ENCODE measurements at regions of chr3 and their contacts with region 1.

Region 1: GRCh38 chr3:10115326-10116137 is at the start of gene BRK1:
- DNase-seq: peak; percentile 83 to 98 (median 93)
- ATAC-seq: peak; percentile 98
- H3K4me3 ChIP-seq: peak within 1 kb of the TSS; percentile 87 to 95
- H3K4me3 Mint-ChIP-seq: peak within 1 kb of the TSS; percentile 99
- H3K27ac ChIP-seq: peak within 1 kb of the TSS; percentile 81 to 87
- H3K27ac Mint-ChIP-seq: peak within 1 kb of the TSS; percentile 99
- H3K4me1 ChIP-seq: peaks cover 27% of the 10 kb centered on the region
- H3K4me1 Mint-ChIP-seq: peaks cover 43% of the 10 kb centered on the region
- H3K27me3 ChIP-seq: no peaks in the 10 kb centered on the region
- H3K27me3 Mint-ChIP-seq: peaks cover under 1% of the 10 kb centered on the region
- CTCF ChIP-seq: no peak
- total RNA-seq, gene BRK1: 31.5 to 36.3 TPM

Region 2: DNA sequence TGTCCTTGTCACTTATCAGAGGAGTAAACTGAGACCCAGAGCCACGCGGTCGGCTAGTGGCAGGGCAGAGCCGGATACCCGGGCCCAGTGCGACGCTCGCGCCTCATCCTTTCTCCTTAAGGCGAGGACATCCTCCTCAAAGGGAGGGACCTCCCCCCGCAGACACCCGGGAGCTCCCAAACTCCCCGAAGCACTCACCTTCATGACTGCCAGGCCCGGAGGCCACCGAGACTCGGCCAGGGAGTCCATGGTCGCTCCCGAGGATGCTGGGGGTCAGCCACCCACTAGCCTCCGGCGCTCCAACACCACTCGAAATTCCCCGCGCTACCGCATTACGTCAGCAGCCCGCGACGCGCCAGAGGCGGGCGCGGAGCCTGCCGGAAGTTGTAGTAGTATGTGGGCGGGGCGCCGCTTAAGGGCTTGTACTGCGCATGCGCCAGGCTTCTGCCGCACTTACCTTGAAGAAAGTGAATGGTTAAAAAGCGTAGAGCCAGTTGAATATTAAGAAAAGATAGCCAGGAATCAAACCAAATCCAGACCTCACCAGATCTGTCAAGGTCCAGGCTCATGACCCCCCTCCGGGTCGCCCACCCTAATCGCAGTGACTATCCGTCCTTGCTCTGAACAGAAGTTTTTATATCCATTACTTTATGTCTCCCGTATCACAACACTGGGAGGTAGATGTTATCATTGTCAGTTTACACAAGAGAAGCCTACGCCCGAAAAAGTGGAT is 1152.2 kb before region 1 on chr3 and contains the start of gene RAD18:
- CTCF ChIA-PET with region 1: no interaction called
- POLR2A ChIA-PET with region 1: no interaction called
- intact Hi-C with region 1: loop called in 1 of 2 experiments (anchors 10 kb)
- DNase-seq: peak; percentile 83 to 95 (median 93)
- ATAC-seq: peak; percentile 94
- H3K4me3 ChIP-seq: peak within 1 kb of the TSS; percentile 85 to 89
- H3K4me3 Mint-ChIP-seq: peak within 1 kb of the TSS; percentile 98
- H3K27ac ChIP-seq: peak within 1 kb of the TSS; percentile 87 to 92
- H3K27ac Mint-ChIP-seq: peak within 1 kb of the TSS; percentile 94
- H3K4me1 ChIP-seq: peaks cover 8% of the 10 kb centered on the region
- H3K4me1 Mint-ChIP-seq: peaks cover 35% of the 10 kb centered on the region
- H3K27me3 ChIP-seq: no peaks in the 10 kb centered on the region
- H3K27me3 Mint-ChIP-seq: peaks cover under 1% of the 10 kb centered on the region
- CTCF ChIP-seq: no peak
- total RNA-seq, gene RAD18: 11.7 to 12.1 TPM

Region 3: GRCh38 chr3:9476935-9477334 is 638.6 kb before region 1 on chr3:
- CTCF ChIA-PET with region 1: no interaction called
- POLR2A ChIA-PET with region 1: no interaction called
- intact Hi-C with region 1: no loop called
- DNase-seq: no peak
- ATAC-seq: no peak
- H3K4me3 ChIP-seq: no peak overlapping the region
- H3K4me3 Mint-ChIP-seq: no peak overlapping the region
- H3K27ac ChIP-seq: no peak overlapping the region
- H3K27ac Mint-ChIP-seq: no peak overlapping the region
- H3K4me1 ChIP-seq: no peaks in the 10 kb centered on the region
- H3K4me1 Mint-ChIP-seq: no peaks in the 10 kb centered on the region
- H3K27me3 ChIP-seq: no peaks in the 10 kb centered on the region
- H3K27me3 Mint-ChIP-seq: no peaks in the 10 kb centered on the region
- CTCF ChIP-seq: no peak

Region 4: DNA sequence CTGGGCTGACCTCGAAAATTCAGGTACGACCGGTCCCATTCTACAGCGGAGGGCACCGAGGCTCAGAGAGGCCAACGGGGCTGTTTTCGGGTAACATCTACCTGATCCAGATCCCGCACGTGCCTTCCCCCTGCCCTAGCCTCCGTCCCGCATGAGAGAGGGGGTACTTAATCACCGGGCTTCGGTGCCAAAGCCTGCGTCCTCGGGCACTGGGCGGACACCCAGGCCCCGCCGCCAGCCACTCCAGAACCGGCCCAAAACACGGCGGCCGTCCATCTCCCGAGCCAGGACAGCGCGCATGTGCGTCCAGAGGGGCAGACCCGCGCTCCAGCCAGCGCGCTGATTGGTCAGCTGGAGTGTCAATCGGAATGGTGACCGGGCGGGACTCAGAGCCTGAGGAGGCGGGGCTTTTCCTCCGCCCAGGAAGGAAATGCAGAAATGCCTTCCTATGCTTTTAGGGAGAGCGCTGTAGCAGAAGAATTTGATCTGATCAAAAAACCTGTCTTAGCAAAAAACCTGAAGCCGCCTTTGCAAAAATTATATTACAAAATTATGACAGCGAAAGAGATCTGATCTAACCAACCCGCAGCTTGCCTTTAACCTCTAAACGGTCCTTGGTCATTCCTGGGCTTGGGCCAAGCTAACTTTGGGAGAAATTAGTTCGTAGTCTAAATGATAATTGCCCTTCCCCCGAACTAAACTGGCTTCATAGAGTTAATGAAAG is 271.7 kb before region 1 on chr3 and contains the start of gene RPUSD3:
- CTCF ChIA-PET with region 1: no interaction called
- POLR2A ChIA-PET with region 1: no interaction called
- intact Hi-C with region 1: loop called in 1 of 2 experiments (anchors 5 kb)
- DNase-seq: peak; percentile 93 to 99 (median 96)
- ATAC-seq: peak; percentile 98
- H3K4me3 ChIP-seq: peak within 1 kb of the TSS; percentile 96 to 99
- H3K4me3 Mint-ChIP-seq: peak within 1 kb of the TSS; percentile 97
- H3K27ac ChIP-seq: peak within 1 kb of the TSS; percentile 64 to 82
- H3K27ac Mint-ChIP-seq: peak within 1 kb of the TSS; percentile 90
- H3K4me1 ChIP-seq: peaks cover 6% of the 10 kb centered on the region
- H3K4me1 Mint-ChIP-seq: peaks cover 26% of the 10 kb centered on the region
- H3K27me3 ChIP-seq: no peaks in the 10 kb centered on the region
- H3K27me3 Mint-ChIP-seq: no peaks in the 10 kb centered on the region
- CTCF ChIP-seq: no peak
- total RNA-seq, gene RPUSD3: 5.3 to 6.4 TPM

Region 5: GRCh38 chr3:9986237-9986725 is 129.3 kb before region 1 on chr3:
- CTCF ChIA-PET with region 1: no interaction called
- POLR2A ChIA-PET with region 1: no interaction called
- intact Hi-C with region 1: loop called in 1 of 2 experiments (anchors 2 kb)
- DNase-seq: no peak
- ATAC-seq: peak; percentile 46
- H3K4me3 ChIP-seq: peak overlapping the region; percentile 71 to 83
- H3K4me3 Mint-ChIP-seq: peak overlapping the region; percentile 93
- H3K27ac ChIP-seq: peak overlapping the region; percentile 83 to 93
- H3K27ac Mint-ChIP-seq: peak overlapping the region; percentile 96
- H3K4me1 ChIP-seq: peaks cover 24% of the 10 kb centered on the region
- H3K4me1 Mint-ChIP-seq: peaks cover 39% of the 10 kb centered on the region
- H3K27me3 ChIP-seq: no peaks in the 10 kb centered on the region
- H3K27me3 Mint-ChIP-seq: no peaks in the 10 kb centered on the region
- CTCF ChIP-seq: no peak

Region 6: DNA sequence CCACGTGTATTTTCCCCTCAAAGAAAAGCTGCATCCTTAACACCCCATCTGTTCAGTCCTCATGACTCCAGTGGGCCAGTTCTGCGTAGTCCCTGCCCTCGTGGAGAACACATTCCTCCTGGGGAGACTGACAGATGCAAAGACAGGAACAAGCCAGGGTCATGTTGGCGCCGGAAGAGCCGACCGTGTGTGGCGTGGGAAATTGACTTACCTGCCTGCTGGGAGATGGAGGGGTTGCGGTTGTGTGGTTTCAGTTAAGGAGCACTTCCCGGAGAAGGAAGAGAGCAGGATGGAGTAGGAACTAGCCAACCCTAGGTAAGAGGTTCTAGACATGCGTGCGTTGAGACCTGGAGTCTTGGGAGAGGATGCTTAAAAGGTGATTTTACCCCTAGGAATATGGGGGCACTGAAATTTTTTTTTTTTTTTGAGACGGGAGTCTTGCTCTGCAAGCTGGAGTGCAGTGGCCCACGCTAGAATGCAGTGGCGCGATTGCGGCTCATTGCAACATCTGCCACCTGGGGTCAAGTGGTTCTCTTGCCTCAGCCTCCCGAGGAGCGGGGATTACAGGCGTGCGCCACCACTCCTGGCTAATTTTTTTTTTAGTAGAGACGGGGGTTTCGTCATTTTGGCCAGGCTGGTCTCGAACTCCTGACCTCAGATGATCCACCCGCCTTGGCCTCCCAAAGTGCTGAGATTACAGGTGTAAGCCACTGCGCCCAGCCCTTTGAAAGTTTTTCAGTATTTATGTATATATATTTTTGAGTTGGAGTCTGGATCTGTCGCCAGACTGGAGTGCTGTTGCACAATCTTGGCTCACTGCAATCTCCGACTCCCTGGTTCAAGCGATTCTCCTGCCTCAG is 27.4 kb after region 1 on chr3:
- CTCF ChIA-PET with region 1: interaction called, 3 read pairs
- POLR2A ChIA-PET with region 1: no interaction called
- intact Hi-C with region 1: loop called (anchors 1 kb)
- DNase-seq: peak in 3 of 9 experiments; percentile 22 to 51 (median 33)
- ATAC-seq: no peak
- H3K4me3 ChIP-seq: peak overlapping the region; percentile 73 to 74
- H3K4me3 Mint-ChIP-seq: peak overlapping the region; percentile 93
- H3K27ac ChIP-seq: peak overlapping the region in 1 of 2 experiments; percentile 54
- H3K27ac Mint-ChIP-seq: peak overlapping the region; percentile 98
- H3K4me1 ChIP-seq: peaks cover 32% of the 10 kb centered on the region
- H3K4me1 Mint-ChIP-seq: peaks cover 32% of the 10 kb centered on the region
- H3K27me3 ChIP-seq: no peaks in the 10 kb centered on the region
- H3K27me3 Mint-ChIP-seq: no peaks in the 10 kb centered on the region
- CTCF ChIP-seq: no peak

Region 7: GRCh38 chr3:10224784-10225665 is 109.5 kb after region 1 on chr3:
- CTCF ChIA-PET with region 1: interaction called, 5 read pairs
- POLR2A ChIA-PET with region 1: no interaction called
- intact Hi-C with region 1: loop called in 1 of 2 experiments (anchors 1 kb)
- DNase-seq: peak; percentile 34 to 81 (median 65)
- ATAC-seq: peak; percentile 70
- H3K4me3 ChIP-seq: no peak overlapping the region
- H3K4me3 Mint-ChIP-seq: peak overlapping the region; percentile 7
- H3K27ac ChIP-seq: peak overlapping the region in 1 of 2 experiments; percentile 30
- H3K27ac Mint-ChIP-seq: peak overlapping the region; percentile 75
- H3K4me1 ChIP-seq: peaks cover 24% of the 10 kb centered on the region
- H3K4me1 Mint-ChIP-seq: peaks cover 51% of the 10 kb centered on the region
- H3K27me3 ChIP-seq: no peaks in the 10 kb centered on the region
- H3K27me3 Mint-ChIP-seq: no peaks in the 10 kb centered on the region
- CTCF ChIP-seq: peak; percentile 86

Region 8: GRCh38 chr3:10437272-10437994 is 321.9 kb after region 1 on chr3:
- CTCF ChIA-PET with region 1: no interaction called
- POLR2A ChIA-PET with region 1: interaction called, 5 read pairs
- intact Hi-C with region 1: loop called in 1 of 2 experiments (anchors 10 kb)
- DNase-seq: peak; percentile 29 to 85 (median 60)
- ATAC-seq: peak; percentile 92
- H3K4me3 ChIP-seq: no peak overlapping the region
- H3K4me3 Mint-ChIP-seq: peak overlapping the region; percentile 33
- H3K27ac ChIP-seq: peak overlapping the region in 1 of 2 experiments; percentile 53
- H3K27ac Mint-ChIP-seq: peak overlapping the region; percentile 75
- H3K4me1 ChIP-seq: peaks cover 20% of the 10 kb centered on the region
- H3K4me1 Mint-ChIP-seq: peaks cover 34% of the 10 kb centered on the region
- H3K27me3 ChIP-seq: no peaks in the 10 kb centered on the region
- H3K27me3 Mint-ChIP-seq: no peaks in the 10 kb centered on the region
- CTCF ChIP-seq: no peak

Measured in CD8-positive, alpha-beta T cell (primary cell).